Sigmoid colon (tissue), 7 donors: ENCODE measurements at regions of chr9 and their contacts with region 1.

Region 1: DNA sequence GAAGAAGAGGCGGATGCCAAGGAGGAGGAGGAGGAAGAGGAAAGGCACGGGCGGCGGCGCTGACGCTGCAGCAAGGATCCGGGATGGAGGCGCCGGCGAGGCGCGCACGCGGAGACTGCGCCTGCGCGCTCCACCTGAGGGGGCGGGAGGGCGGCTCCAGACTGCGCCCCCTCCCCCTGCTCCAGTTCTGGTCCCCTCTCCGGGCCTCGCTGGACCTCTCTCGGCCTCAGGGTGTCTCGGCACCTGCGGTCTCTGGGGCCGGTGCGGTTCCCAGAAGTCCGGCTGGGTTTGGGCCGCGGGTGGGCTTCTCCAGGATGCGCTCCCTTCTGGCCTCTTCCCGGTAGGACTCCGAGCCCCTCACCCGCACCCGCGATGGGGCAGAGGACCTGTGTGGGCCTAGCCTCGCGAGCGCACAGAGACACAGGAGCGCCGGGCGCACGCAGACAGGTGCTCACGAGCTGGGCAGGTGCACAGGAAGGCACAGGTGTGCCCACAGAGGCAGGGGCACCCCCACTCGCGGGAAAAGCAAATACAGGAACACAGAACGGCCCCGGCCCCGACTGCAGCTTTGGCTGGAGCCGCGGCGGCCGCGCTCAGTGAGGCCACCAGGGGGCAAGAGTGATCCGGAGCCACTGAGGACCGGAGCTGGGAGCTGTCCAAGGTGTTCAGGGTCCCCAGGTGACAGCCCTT is at the start of gene NPDC1:
- DNase-seq: peak; percentile 87
- H3K4me3 ChIP-seq: peak within 1 kb of the TSS; percentile 40 to 74 (median 65)
- H3K27ac ChIP-seq: peak within 1 kb of the TSS; percentile 65 to 72 (median 68)
- H3K4me1 ChIP-seq: peaks cover 0 to 43% (median 38%) of the 10 kb centered on the region in 4 donors
- H3K27me3 ChIP-seq: peaks cover 22 to 45% (median 41%) of the 10 kb centered on the region in 3 donors
- CTCF ChIP-seq: peak; percentile 78 to 84 (median 81)
- EP300 ChIP-seq: no peak
- POLR2A ChIP-seq: no peak
- total RNA-seq, gene NPDC1: 21.4 to 101 (median 42.4) TPM

Region 2: GRCh38 chr9:136762915-136763648 is 283.2 kb before region 1 on chr9:
- intact Hi-C with region 1: no loop called
- DNase-seq: peak; percentile 60
- H3K4me3 ChIP-seq: no peak overlapping the region
- H3K27ac ChIP-seq: no peak overlapping the region
- H3K4me1 ChIP-seq: peaks cover 0 to 7% (median 0%) of the 10 kb centered on the region in 4 donors
- H3K27me3 ChIP-seq: peaks cover 11 to 72% (median 35%) of the 10 kb centered on the region in 3 donors
- CTCF ChIP-seq: no peak
- EP300 ChIP-seq: no peak
- POLR2A ChIP-seq: no peak

Region 3: GRCh38 chr9:137067860-137068538 is 21.8 kb after region 1 on chr9:
- intact Hi-C with region 1: loop called (anchors 1 kb)
- DNase-seq: peak; percentile 88
- H3K4me3 ChIP-seq: no peak overlapping the region
- H3K27ac ChIP-seq: no peak overlapping the region
- H3K4me1 ChIP-seq: peaks cover 0 to 26% (median 20%) of the 10 kb centered on the region in 4 donors
- H3K27me3 ChIP-seq: peaks cover 18 to 36% (median 32%) of the 10 kb centered on the region in 3 donors
- CTCF ChIP-seq: peak; percentile 50 to 86 (median 77)
- EP300 ChIP-seq: no peak
- POLR2A ChIP-seq: no peak

Region 4: GRCh38 chr9:137095664-137096517 is 49.6 kb after region 1 on chr9:
- intact Hi-C with region 1: no loop called
- DNase-seq: no peak
- H3K4me3 ChIP-seq: no peak overlapping the region
- H3K27ac ChIP-seq: no peak overlapping the region
- H3K4me1 ChIP-seq: no peaks in the 10 kb centered on the region
- H3K27me3 ChIP-seq: no peaks in the 10 kb centered on the region
- CTCF ChIP-seq: no peak
- EP300 ChIP-seq: no peak
- POLR2A ChIP-seq: no peak